Gastrocnemius medialis (tissue), 4 donors: ENCODE measurements at regions of chr16 and their contacts with region 1.

Region 1: DNA sequence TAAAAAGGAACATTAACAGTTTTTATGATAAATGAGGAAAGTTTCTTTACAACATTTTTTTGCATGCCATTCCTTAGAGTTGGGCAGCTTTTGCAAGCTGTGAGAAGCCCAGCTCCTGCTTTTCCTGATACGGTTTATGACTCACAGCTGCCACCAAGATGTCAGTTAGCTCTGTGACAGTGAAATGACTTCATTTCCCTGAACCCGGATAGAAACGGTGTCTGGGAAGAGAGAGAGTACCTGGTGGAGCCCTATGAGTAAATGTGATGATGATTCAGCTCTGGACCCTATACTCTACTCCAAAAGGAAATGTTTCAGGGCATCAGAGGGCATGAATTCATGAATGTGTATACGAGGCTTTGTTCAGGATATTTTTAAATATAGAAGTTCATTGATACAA is 366.3 kb upstream of the HSBP1 start:
- DNase-seq: no peak
- ATAC-seq: no peak
- H3K4me3 ChIP-seq: no peak overlapping the region
- H3K27ac ChIP-seq: no peak overlapping the region
- H3K4me1 ChIP-seq: no peaks in the 10 kb centered on the region
- H3K27me3 ChIP-seq: no peaks in the 10 kb centered on the region
- CTCF ChIP-seq: no peak
- POLR2A ChIP-seq: no peak

Region 2: GRCh38 chr16:82603784-82604411 is 837.6 kb before region 1 on chr16:
- in situ Hi-C with region 1: loop called in 2 of 4 experiments (anchors 25 kb)
- intact Hi-C with region 1: no loop called
- DNase-seq: peak; percentile 41 to 58
- ATAC-seq: peak; percentile 88 to 97
- H3K4me3 ChIP-seq: no peak overlapping the region
- H3K27ac ChIP-seq: no peak overlapping the region
- H3K4me1 ChIP-seq: no peaks in the 10 kb centered on the region
- H3K27me3 ChIP-seq: no peaks in the 10 kb centered on the region
- CTCF ChIP-seq: peak; percentile 57 to 81 (median 63)
- POLR2A ChIP-seq: no peak

Region 3: DNA sequence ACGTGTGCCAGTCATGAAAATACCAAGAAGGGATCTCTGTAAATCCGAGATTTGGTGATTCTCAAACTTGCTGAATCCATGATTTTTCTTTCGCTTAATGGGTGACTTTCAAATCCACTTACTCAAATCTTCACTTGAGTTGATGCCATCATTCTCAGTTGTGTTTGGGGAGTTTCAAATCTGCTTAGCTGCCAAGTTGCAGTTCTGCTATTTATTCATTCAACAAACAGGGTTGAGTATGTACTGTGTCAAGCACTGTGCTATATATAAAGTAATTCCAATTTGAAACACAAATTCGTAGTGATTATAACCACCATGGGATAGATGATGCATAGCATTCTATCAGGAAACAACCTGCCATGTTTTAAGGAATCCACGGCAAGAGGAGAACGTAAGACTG is 420.5 kb before region 1 on chr16:
- in situ Hi-C with region 1: no loop called
- intact Hi-C with region 1: no loop called
- DNase-seq: no peak
- ATAC-seq: no peak
- H3K4me3 ChIP-seq: no peak overlapping the region
- H3K27ac ChIP-seq: no peak overlapping the region
- H3K4me1 ChIP-seq: peaks cover 0 to 5% of the 10 kb centered on the region in 2 donors
- H3K27me3 ChIP-seq: no peaks in the 10 kb centered on the region
- CTCF ChIP-seq: no peak
- POLR2A ChIP-seq: no peak

Region 4: GRCh38 chr16:83200005-83200779 is 241.3 kb before region 1 on chr16:
- in situ Hi-C with region 1: no loop called
- intact Hi-C with region 1: loop called (anchors 10 kb)
- DNase-seq: peak in 1 of 2 donors; percentile 15
- ATAC-seq: peak in 1 of 2 donors; percentile 42
- H3K4me3 ChIP-seq: no peak overlapping the region
- H3K27ac ChIP-seq: no peak overlapping the region
- H3K4me1 ChIP-seq: no peaks in the 10 kb centered on the region
- H3K27me3 ChIP-seq: no peaks in the 10 kb centered on the region
- CTCF ChIP-seq: peak in 2 of 5 experiments; percentile 27 to 31
- POLR2A ChIP-seq: no peak